ENCODE measurements at regions of chr10 and their contacts with region 1.

Region 1: GRCh38 chr10:68156373-68157185 is 47.3 kb downstream of the MYPN start:
- DNase-seq: peak; percentile 76
- ATAC-seq: peak; percentile 67
- H3K4me3 Mint-ChIP-seq: no peak overlapping the region
- H3K27ac Mint-ChIP-seq: no peak overlapping the region
- H3K4me1 Mint-ChIP-seq: peaks cover 2% of the 10 kb centered on the region
- H3K27me3 Mint-ChIP-seq: peaks cover 1% of the 10 kb centered on the region

Region 2: DNA sequence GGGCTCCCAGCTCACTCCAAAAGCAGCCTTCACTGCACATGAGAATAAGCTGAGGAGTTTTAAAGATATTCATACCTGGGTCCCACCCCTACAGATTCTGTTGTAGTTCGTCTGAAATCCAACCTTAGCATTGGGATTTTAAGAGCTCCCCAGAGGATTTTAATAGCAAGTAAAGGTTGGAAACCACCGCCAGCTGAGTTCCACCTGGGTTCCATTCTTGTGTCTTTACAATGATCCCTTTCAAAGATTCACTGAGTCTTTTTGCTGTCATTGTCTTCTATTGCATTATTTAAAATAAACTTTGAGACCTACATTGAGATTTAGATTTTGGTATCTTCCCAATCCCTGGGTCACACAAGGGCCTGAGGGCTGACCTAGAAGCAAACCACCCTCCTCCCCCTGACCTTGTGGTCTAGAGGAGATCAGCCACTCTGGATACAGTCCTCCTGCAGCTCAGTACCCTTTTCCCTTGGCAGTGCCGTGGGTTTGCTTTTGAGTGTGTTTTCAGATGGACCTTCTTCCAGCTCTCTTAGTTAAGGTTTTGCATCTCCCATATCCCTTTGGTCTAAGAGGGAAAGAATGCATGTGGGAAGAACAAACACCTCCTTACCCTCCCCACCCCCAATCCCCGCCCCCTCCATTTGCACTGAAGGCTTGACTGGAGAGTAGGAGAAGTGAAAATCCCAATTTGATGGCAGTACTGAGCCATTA is 294.7 kb before region 1 on chr10:
- CTCF ChIA-PET with region 1: interaction called, 94 read pairs
- POLR2A ChIA-PET with region 1: no interaction called
- intact Hi-C with region 1: no loop called
- DNase-seq: no peak
- ATAC-seq: no peak
- H3K4me3 Mint-ChIP-seq: no peak overlapping the region
- H3K27ac Mint-ChIP-seq: no peak overlapping the region
- H3K4me1 Mint-ChIP-seq: no peaks in the 10 kb centered on the region
- H3K27me3 Mint-ChIP-seq: no peaks in the 10 kb centered on the region

Region 3: DNA sequence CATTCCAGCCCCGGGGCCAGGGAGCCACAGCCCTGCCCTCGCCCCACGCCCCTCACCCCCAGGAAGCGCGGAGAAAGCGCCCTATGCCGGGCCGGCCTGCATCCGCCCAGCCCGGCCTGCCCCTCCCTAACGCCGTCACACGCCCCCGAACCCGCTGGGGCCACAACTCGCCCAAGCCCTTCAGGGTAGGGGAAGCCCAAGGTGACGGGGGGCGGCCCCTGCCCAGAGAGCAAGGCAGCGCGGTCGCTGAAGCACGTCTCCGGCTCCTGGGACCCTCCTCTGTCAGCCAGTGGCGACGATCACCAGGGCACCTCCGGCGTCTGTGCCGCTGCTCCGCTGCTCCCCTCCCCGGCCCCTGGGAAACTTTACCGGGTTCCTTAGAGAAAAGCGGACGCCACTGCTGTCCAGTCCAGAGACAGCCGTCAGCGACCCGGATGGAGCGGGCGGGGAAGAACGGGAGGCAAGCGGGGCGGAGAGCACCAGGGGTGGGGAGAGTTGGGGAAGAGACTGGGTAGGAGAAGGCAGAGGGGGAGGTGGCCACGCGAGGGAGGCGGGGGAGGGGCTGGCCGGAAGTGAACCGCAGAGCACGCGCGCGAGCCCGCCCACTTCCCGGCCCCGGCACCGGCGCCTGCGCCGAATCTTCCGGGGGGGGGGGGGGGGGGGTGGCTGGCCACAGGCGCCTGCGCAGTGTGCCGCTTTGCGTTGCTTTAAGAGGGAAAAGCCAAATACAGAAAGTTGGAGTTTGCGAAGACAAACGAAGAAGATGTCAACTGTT is 81.6 kb before region 1 on chr10 and contains the start of gene HERC4:
- CTCF ChIA-PET with region 1: interaction called, 3 read pairs
- POLR2A ChIA-PET with region 1: no interaction called
- intact Hi-C with region 1: loop called in 1 of 2 experiments (anchors 2 kb)
- DNase-seq: peak; percentile 94
- ATAC-seq: peak; percentile 83
- H3K4me3 Mint-ChIP-seq: peak within 1 kb of the TSS; percentile 98
- H3K27ac Mint-ChIP-seq: peak within 1 kb of the TSS; percentile 93
- H3K4me1 Mint-ChIP-seq: peaks cover 31% of the 10 kb centered on the region
- H3K27me3 Mint-ChIP-seq: no peaks in the 10 kb centered on the region
- total RNA-seq, gene HERC4: 39.5 to 50.8 TPM

Region 4: DNA sequence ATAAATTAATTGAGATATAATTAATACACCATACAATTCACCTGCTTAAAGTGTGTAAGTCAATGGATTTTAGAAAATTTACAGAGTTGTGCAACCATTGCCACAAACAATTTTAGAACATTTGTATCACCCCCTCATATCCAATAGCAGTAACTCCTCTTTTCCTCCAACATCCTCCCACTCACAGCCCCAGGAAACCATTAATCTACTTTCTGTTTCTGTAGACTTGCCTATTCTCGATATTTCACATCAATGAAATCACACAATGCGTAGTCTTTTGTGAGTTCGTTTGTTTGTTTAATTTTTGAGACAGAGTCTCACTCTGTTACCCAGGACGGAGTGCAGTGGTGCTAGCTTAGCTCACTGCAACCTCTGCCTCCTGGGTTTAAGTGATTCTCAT is 67.8 kb before region 1 on chr10:
- CTCF ChIA-PET with region 1: interaction called, 5 read pairs
- POLR2A ChIA-PET with region 1: no interaction called
- intact Hi-C with region 1: loop called (anchors 2 to 5 kb)
- DNase-seq: peak; percentile 33
- ATAC-seq: peak; percentile 90
- H3K4me3 Mint-ChIP-seq: peak overlapping the region; percentile 10
- H3K27ac Mint-ChIP-seq: no peak overlapping the region
- H3K4me1 Mint-ChIP-seq: peaks cover 9% of the 10 kb centered on the region
- H3K27me3 Mint-ChIP-seq: peaks cover 4% of the 10 kb centered on the region